PC-9 (cell line): ENCODE measurements at regions of chr9 and their contacts with region 1.

Region 1: DNA sequence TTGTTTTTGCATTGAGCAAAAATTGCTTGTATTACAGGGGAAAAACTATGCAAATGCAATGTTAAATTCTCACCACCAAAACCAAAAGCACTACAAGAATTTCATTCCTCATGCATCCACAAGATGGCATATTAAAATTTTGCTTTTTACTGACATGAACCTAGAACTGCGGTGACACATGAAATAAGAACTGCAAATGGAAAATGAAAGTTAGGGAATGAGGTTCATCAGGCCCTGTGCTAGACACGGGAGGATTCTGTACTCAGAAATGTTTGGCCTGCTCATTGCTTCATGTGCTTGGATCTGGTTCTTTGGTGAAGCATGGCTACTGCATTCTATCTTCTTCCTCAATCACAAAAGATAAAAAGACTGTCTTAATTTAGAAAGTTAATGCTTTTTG is 9.1 kb upstream of the RFK start:
- DNase-seq: peak in 1 of 2 experiments; percentile 68
- H3K4me3 ChIP-seq: 0 out of 2 replicates have a peak overlapping the region, but pooled peaks have one; percentile 15
- H3K27ac ChIP-seq: no peak overlapping the region
- H3K4me1 ChIP-seq: peaks cover 37% of the 10 kb centered on the region
- H3K27me3 ChIP-seq: no peaks in the 10 kb centered on the region
- CTCF ChIP-seq: peak; percentile 58; the same call in 1 of the 2 replicates

Region 2: GRCh38 chr9:75170898-75171360 is 1232.4 kb before region 1 on chr9:
- CTCF ChIA-PET with region 1: interaction called, 12 read pairs
- POLR2A ChIA-PET with region 1: no interaction called
- intact Hi-C with region 1: no loop called
- DNase-seq: peak; percentile 21 to 52
- H3K4me3 ChIP-seq: no peak overlapping the region
- H3K27ac ChIP-seq: no peak overlapping the region; the same call in 1 of the 2 replicates
- H3K4me1 ChIP-seq: peaks cover 40% of the 10 kb centered on the region
- H3K27me3 ChIP-seq: no peaks in the 10 kb centered on the region
- CTCF ChIP-seq: no peak

Region 3: DNA sequence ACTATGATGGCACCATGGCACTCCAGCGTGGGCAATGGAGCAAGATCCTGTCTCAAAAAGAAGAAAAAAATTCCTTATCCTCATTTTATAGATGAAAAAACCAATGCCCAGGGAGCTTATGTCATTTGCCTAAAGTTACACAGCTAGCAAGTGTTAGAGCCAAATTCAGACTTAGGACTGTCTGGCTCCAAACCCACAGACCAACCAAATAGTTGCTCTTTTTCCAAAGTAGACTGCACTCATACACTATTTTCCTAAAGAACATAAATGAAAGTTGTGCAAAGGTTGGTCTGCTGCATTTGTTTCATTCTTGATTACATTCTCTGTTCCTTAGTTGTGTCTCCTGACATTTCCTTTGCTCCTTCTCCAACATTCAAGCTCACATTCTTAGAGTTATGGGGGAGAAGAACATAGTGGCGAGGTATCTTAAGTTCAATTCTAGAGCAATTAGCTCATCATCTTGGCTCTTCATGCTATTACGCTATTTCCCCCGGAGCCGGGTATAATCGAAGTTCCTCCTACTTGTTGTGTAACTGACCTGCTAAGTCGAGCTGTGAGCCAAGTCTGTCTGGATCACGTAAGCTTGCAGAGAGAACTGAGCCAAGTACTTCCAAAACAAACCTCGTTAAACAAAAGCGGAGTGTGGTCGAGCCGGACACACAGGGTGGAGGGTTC is 147.4 kb before region 1 on chr9:
- CTCF ChIA-PET with region 1: no interaction called
- POLR2A ChIA-PET with region 1: no interaction called
- intact Hi-C with region 1: no loop called
- DNase-seq: no peak
- H3K4me3 ChIP-seq: no peak overlapping the region
- H3K27ac ChIP-seq: no peak overlapping the region
- H3K4me1 ChIP-seq: no peaks in the 10 kb centered on the region
- H3K27me3 ChIP-seq: no peaks in the 10 kb centered on the region
- CTCF ChIP-seq: no peak